ENCODE measurements at regions of chr1 and their contacts with region 1.

Region 1: DNA sequence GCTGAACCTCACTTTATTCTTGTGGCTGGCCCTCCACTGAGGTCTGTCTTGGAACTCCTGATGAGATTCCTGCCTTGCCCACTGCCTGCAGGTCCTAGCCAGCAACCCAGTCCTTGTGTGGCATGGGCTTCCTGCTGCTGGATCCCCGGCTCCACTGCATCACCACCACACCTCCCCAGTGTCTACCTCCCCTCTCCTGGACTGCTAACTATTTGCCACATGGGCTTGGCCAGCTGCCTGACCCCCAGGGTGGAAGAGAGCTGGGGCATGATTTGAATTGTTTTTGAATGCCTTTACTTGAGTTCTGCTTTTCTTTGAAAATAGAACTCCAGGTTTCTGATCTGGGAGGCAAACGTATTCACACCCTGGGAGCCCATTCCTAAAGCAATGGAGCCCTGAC is 41.2 kb downstream of the SPAG17 start:
- DNase-seq: no peak
- H3K4me3 ChIP-seq: no peak overlapping the region
- H3K27ac ChIP-seq: no peak overlapping the region
- H3K4me1 ChIP-seq: no peaks in the 10 kb centered on the region
- H3K27me3 ChIP-seq: no peaks in the 10 kb centered on the region
- CTCF ChIP-seq: no peak
- POLR2A ChIP-seq: no peak

Region 2: DNA sequence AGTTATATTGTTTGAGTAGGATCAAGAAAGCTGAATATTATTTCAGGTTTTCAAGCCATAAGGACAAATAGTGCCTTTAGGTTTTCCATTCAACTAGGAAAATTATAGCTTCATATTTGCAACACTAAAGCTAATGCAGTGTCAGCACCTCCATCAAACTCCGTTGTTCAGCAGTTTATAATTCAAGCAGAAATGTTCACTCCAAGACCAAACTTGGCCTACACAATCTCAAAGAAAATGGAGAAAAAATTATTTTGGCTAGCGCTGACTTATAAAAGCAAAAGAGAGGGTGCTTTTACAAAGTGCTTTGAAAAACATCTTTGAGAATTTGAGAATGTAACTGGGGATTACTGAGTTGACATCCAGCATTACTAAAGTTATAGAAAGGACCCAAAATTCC is 39.8 kb after region 1 on chr1:
- CTCF ChIA-PET with region 1: no interaction called
- POLR2A ChIA-PET with region 1: no interaction called
- dilution Hi-C with region 1: no loop called
- intact Hi-C with region 1: loop called (anchors 2 kb)
- DNase-seq: no peak
- H3K4me3 ChIP-seq: no peak overlapping the region
- H3K27ac ChIP-seq: no peak overlapping the region
- H3K4me1 ChIP-seq: no peaks in the 10 kb centered on the region
- H3K27me3 ChIP-seq: no peaks in the 10 kb centered on the region
- CTCF ChIP-seq: no peak
- POLR2A ChIP-seq: no peak

Measured in endothelial cell of umbilical vein (primary cell).